Mammary epithelial cell (primary cell): ENCODE measurements at regions of chr19 and their contacts with region 1.

Region 1: GRCh38 chr19:52700673-52701072 is 34.2 kb downstream of the ZNF611 start:
- DNase-seq: no peak
- H3K4me3 ChIP-seq: no peak overlapping the region
- H3K27ac ChIP-seq: no peak overlapping the region
- H3K4me1 ChIP-seq: no peaks in the 10 kb centered on the region
- H3K27me3 ChIP-seq: no peaks in the 10 kb centered on the region
- CTCF ChIP-seq: no peak

Region 2: GRCh38 chr19:52622261-52622660 is 78.4 kb before region 1 on chr19:
- CTCF ChIA-PET with region 1: interaction called, 10 read pairs
- dilution Hi-C with region 1: no loop called
- in situ Hi-C with region 1: no loop called
- intact Hi-C with region 1: no loop called
- DNase-seq: no peak
- H3K4me3 ChIP-seq: no peak overlapping the region
- H3K27ac ChIP-seq: no peak overlapping the region
- H3K4me1 ChIP-seq: no peaks in the 10 kb centered on the region
- H3K27me3 ChIP-seq: no peaks in the 10 kb centered on the region
- CTCF ChIP-seq: no peak

Region 3: DNA sequence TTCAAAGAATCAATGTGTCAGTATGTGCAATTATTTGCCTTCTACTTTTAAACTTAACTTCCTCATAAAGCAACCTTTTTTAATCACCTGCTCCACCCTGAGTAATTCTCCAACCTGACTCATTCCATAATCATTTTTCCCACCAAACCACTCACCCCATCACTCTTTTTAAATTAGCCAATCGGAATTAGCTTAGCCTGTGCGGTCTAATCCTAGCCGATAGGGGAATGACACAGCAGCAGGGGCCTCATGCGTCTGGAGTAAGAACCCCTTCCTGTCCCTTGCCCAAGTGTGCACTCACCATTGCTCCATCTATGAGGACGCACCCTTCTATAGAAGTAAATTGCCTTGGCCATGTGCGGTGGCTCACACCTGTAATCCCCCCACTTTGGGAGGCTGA is 35.1 kb before region 1 on chr19:
- CTCF ChIA-PET with region 1: no interaction called
- dilution Hi-C with region 1: no loop called
- in situ Hi-C with region 1: no loop called
- intact Hi-C with region 1: no loop called
- DNase-seq: peak; percentile 70
- H3K4me3 ChIP-seq: no peak overlapping the region
- H3K27ac ChIP-seq: peak overlapping the region; percentile 33
- H3K4me1 ChIP-seq: peaks cover 28% of the 10 kb centered on the region
- H3K27me3 ChIP-seq: no peaks in the 10 kb centered on the region
- CTCF ChIP-seq: no peak

Region 4: DNA sequence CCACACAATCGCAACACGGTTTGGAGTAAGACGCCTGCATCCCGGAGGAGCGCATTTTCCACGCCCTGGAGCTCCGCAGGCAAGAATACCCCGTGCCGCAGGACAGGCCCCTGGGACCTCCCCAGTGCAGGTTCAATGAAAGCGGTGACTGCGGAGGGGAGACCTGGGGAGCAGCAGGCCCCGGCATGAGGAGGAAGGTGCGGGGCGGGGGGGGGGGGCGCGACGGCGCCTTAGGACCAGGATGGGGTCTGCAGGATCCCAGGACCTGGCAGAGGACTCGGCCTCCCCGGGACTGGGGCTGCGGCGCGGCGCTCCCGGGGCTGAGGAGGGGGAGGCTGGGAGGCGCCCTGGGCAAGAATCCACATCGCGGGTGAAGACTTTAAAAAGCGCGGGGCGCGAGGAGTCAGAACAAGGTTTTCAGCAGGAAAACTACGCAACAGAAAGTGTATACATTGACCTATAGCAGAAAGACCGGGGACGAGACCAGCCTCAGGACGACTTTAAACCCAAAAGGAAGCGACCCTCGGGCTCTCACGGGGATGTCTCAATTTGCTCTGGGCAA is 33.7 kb after region 1 on chr19:
- CTCF ChIA-PET with region 1: no interaction called
- dilution Hi-C with region 1: no loop called
- in situ Hi-C with region 1: no loop called
- intact Hi-C with region 1: no loop called
- DNase-seq: peak; percentile 5
- H3K4me3 ChIP-seq: peak overlapping the region; percentile 74 to 85 (median 84)
- H3K27ac ChIP-seq: peak overlapping the region; percentile 81
- H3K4me1 ChIP-seq: peaks cover 15% of the 10 kb centered on the region
- H3K27me3 ChIP-seq: no peaks in the 10 kb centered on the region
- CTCF ChIP-seq: no peak

Region 5: GRCh38 chr19:52889932-52890331 is 189.3 kb after region 1 on chr19:
- CTCF ChIA-PET with region 1: no interaction called
- dilution Hi-C with region 1: no loop called
- in situ Hi-C with region 1: no loop called
- intact Hi-C with region 1: no loop called
- DNase-seq: no peak
- H3K4me3 ChIP-seq: no peak overlapping the region
- H3K27ac ChIP-seq: no peak overlapping the region
- H3K4me1 ChIP-seq: no peaks in the 10 kb centered on the region
- H3K27me3 ChIP-seq: no peaks in the 10 kb centered on the region
- CTCF ChIP-seq: no peak